Endothelial cell of umbilical vein (primary cell): ENCODE measurements at regions of chr1 and their contacts with region 1.

Region 1: DNA sequence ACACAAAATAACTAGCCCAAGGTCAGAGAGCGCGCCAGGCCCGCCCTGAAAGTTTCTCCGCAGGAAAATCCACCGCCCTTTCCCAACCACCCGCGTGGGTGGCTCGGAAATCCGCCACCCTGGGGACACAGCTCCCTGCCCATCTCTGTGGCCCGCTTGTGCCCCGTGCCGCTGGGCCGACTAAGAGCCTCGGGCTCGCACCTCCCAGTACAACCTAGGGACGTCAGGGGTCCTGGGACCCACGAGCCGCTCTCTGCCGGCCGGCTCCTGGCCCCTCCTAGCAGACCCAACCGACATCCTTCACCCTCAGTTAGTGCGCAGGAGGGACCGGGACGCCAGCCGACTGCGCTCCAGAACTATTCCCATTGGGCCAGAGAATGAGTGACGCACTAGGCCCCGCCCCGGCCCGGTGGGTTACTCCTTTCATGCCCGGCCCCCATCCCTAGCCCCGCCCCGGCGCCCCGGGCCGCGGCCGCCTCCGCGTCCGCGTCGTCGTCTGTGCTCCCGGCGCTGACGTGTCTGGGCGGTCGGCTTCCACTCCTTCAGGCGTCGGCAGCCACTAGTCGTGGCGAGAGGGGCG is 395 bp upstream of the UAP1 start:
- DNase-seq: peak; percentile 98
- H3K4me3 ChIP-seq: peak overlapping the region; percentile 23 to 95 (median 34)
- H3K27ac ChIP-seq: peak overlapping the region; percentile 89
- H3K4me1 ChIP-seq: peaks cover 25% of the 10 kb centered on the region
- H3K27me3 ChIP-seq: no peaks in the 10 kb centered on the region
- CTCF ChIP-seq: no peak
- POLR2A ChIP-seq: no peak

Region 2: DNA sequence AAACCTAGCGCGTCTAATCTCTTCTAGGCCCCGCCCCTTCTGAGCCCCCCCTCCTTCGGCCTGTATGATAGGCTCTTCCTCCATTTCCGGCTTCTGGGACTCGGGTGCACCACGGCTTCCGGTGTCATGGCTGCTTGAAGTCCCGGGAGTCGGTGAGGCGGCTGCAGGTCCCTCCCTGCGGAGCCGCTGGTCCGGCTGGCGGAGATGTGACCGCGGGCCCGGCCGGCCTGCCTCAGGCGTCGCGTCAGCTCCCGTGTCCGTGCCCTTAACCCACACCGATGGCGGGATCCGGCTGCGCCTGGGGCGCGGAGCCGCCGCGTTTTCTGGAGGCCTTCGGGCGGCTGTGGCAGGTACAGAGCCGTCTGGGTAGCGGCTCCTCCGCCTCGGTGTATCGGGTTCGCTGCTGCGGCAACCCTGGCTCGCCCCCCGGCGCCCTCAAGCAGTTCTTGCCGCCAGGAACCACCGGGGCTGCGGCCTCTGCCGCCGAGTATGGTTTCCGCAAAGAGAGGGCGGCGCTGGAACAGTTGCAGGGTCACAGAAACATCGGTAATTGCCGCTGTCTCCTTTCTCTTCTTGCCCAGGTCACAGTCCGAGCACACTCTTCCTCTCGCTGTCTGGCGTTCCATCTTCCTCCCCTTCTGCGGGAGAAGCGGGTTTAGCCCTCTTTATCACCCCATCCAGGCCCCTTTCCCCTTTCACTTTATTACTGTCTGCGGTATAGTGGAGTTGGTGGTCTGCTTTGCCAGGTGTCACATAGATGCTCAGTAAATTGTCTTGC is 63.2 kb before region 1 on chr1 and contains the start of gene UHMK1:
- CTCF ChIA-PET with region 1: no interaction called
- POLR2A ChIA-PET with region 1: no interaction called
- dilution Hi-C with region 1: no loop called
- intact Hi-C with region 1: loop called (anchors 1 kb)
- DNase-seq: peak; percentile 92
- H3K4me3 ChIP-seq: peak within 1 kb of the TSS; percentile 47 to 96 (median 78)
- H3K27ac ChIP-seq: peak within 1 kb of the TSS; percentile 73
- H3K4me1 ChIP-seq: peaks cover 14% of the 10 kb centered on the region
- H3K27me3 ChIP-seq: no peaks in the 10 kb centered on the region
- CTCF ChIP-seq: no peak
- POLR2A ChIP-seq: peak; percentile 94
- total RNA-seq, gene UHMK1: 35.0 and 35.1 TPM in 2 replicates

Region 3: GRCh38 chr1:162527324-162527723 is 33.8 kb before region 1 on chr1:
- CTCF ChIA-PET with region 1: interaction called, 3 read pairs
- POLR2A ChIA-PET with region 1: no interaction called
- dilution Hi-C with region 1: no loop called
- intact Hi-C with region 1: loop called (anchors 5 kb)
- DNase-seq: no peak
- H3K4me3 ChIP-seq: no peak overlapping the region
- H3K27ac ChIP-seq: no peak overlapping the region
- H3K4me1 ChIP-seq: peaks cover 14% of the 10 kb centered on the region
- H3K27me3 ChIP-seq: no peaks in the 10 kb centered on the region
- CTCF ChIP-seq: no peak
- POLR2A ChIP-seq: no peak

Region 4: GRCh38 chr1:162538815-162539431 is 22.2 kb before region 1 on chr1:
- CTCF ChIA-PET with region 1: interaction called, 5 read pairs
- POLR2A ChIA-PET with region 1: interaction called, 4 read pairs
- dilution Hi-C with region 1: no loop called
- intact Hi-C with region 1: loop called (anchors 1 kb)
- DNase-seq: peak; percentile 84
- H3K4me3 ChIP-seq: no peak overlapping the region
- H3K27ac ChIP-seq: peak overlapping the region; percentile 93
- H3K4me1 ChIP-seq: peaks cover 50% of the 10 kb centered on the region
- H3K27me3 ChIP-seq: no peaks in the 10 kb centered on the region
- CTCF ChIP-seq: no peak
- POLR2A ChIP-seq: peak; percentile 3

Region 5: DNA sequence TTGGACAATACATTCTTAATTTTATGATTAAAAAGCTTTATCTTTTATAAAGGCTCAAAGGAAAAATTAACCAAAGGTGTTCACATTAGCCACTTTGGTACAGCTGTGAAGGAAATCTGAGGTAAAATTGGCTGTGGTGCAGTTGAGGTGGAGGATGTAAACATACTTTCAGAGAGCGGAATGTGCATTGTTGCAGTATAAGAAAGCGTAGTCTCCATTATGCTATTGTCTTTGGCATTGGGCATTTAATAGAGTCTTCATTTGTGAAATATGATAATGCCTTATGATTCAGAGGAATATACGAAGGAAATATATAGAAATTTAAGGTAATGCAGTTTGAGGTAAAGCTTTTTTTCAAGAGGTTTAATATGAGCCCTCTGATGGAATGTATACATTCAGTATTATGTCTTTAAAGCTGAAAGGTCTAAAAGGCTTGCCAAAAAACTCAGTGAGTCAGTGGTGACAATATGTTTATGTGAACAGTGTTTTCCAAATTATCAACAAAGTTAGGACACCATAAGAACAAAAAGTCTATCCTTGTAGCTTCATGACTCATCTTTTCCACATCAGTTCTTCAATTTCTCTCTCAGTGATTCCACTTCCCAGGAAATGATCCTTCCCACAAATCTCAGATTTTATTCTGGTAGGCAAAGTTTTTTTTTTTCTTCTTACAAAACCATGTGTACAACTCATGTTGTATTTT is 44.2 kb after region 1 on chr1:
- CTCF ChIA-PET with region 1: interaction called, 3 read pairs
- POLR2A ChIA-PET with region 1: no interaction called
- dilution Hi-C with region 1: no loop called
- intact Hi-C with region 1: loop called (anchors 2 kb)
- DNase-seq: peak; percentile 94
- H3K4me3 ChIP-seq: no peak overlapping the region
- H3K27ac ChIP-seq: peak overlapping the region; percentile 87
- H3K4me1 ChIP-seq: peaks cover 20% of the 10 kb centered on the region
- H3K27me3 ChIP-seq: no peaks in the 10 kb centered on the region
- CTCF ChIP-seq: no peak
- POLR2A ChIP-seq: peak; percentile 43